ENCODE measurements at regions of chr18 and their contacts with region 1.

Region 1: DNA sequence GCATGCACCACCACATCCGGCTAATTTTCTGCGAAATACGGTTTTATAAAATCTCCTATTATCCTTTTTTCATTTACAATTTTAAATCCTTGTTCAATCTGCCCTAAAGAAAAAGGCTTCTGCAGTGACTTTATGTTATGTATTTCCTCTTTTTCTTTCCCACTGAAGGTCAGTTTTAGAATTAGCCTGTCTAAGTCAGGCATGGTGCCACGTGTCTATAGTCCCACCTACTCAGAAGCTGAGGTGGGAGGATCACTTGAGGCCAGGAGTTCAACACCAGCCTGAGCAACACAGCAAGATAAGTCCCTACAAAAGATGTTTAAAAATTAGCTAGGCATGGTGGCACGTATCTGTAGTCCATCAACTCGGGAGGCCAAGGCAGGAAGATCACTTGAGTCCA is 39.8 kb upstream of the TNFRSF11A start:
- DNase-seq: no peak
- H3K4me3 ChIP-seq: no peak overlapping the region
- H3K27ac ChIP-seq: no peak overlapping the region
- H3K4me1 ChIP-seq: no peaks in the 10 kb centered on the region
- H3K27me3 ChIP-seq: no peaks in the 10 kb centered on the region
- CTCF ChIP-seq: no peak
- EP300 ChIP-seq: no peak
- POLR2A ChIP-seq: no peak
- RAD21 ChIP-seq: no peak

Region 2: DNA sequence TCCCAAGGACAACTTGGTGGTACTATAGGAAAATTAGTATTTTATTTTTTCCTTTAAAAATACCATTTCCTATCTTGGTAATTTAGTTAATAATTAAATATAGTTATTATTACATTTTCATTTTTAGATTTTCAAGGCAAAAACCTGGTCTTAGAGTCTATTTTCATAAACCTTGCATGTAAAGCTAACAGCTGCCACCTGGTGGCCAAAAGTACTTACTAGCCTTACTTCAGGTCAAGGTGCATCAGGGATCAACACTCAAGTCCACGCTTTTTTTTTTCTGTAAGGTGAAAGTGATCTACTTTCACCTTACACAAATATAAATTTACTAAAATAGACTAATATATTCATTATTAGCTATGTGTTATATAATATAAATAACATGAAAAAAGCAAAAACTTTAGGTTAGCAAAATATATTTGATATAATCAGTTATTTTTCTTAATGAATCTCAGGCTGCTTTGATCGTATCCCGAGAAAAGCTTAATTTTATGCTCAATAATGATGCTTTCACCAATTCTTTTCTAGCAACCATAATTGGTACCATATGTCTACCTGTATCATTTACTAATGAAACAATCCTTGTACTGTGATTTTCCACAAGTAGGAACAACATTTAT is 35.7 kb before region 1 on chr18:
- CTCF ChIA-PET with region 1: interaction called, 11 read pairs
- POLR2A ChIA-PET with region 1: no interaction called
- DNase-seq: peak in 1 of 2 experiments; percentile 59
- H3K4me3 ChIP-seq: no peak overlapping the region
- H3K27ac ChIP-seq: no peak overlapping the region
- H3K4me1 ChIP-seq: no peaks in the 10 kb centered on the region
- H3K27me3 ChIP-seq: no peaks in the 10 kb centered on the region
- CTCF ChIP-seq: peak in 2 of 3 experiments; percentile 63 to 74; a peak in 3 of 4 replicates
- EP300 ChIP-seq: no peak
- POLR2A ChIP-seq: no peak
- RAD21 ChIP-seq: peak; percentile 57 to 70